ENCODE measurements at regions of chr7 and their contacts with region 1.

Region 1: DNA sequence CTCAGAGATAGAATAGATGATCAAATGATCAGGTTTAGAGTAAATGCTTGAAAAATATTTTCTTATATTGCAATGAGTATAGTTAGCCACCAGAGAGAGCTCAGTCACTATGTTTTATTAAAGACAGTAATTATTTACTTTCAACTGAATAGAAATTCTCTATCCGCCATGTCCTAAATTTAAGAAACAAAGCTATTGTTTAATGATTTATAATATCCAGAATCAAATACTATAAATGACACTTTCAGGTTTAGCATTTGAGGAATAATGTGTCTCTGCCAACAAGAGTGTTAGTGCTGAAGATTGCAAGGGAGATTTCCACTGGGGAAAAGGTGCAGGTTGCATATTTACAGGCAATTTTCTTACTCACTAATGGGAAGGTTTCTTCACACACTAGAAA is 184.7 kb downstream of the DGKB start:
- DNase-seq: no peak

Region 2: DNA sequence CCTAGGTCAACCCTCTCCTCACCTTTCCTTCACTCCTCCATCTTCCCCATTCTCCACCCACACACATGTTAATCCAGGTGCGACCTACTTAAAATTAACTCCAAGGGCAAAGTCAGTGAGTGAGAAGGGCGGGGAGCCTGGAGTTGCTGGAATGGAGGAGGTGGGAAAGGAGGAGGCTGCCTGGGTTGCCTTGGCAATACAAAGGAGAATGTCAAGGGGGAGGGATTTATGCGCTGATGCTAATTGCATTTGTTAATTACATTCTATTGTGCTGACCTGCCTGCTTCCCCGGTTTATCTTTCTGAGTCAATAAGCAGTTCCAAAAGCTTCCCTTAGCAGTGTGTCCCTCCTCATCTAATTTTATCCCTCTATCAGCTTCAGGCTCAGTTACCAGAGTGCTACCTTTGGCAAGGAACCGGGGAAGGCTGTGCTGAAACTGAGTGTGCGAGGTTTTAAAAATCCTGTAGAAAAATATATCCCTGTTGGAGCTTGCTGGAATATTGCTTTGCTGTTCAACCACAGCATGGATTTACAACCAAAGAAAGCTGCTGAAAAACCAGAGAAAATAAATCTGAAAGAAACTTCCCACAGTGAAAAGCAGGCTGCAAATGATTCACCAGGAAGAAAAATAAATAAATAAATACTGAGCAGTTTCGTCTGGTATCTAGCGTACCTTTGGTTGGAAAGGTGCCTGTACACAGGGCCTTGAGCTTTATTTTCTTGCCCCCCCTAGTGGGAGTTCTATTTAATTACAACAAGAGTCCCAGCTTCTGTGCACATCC is 297.9 kb after region 1 on chr7:
- intact Hi-C with region 1: loop called (anchors 2 kb)
- DNase-seq: peak in 3 of 10 donors; percentile 7 to 66 (median 11)

Region 3: DNA sequence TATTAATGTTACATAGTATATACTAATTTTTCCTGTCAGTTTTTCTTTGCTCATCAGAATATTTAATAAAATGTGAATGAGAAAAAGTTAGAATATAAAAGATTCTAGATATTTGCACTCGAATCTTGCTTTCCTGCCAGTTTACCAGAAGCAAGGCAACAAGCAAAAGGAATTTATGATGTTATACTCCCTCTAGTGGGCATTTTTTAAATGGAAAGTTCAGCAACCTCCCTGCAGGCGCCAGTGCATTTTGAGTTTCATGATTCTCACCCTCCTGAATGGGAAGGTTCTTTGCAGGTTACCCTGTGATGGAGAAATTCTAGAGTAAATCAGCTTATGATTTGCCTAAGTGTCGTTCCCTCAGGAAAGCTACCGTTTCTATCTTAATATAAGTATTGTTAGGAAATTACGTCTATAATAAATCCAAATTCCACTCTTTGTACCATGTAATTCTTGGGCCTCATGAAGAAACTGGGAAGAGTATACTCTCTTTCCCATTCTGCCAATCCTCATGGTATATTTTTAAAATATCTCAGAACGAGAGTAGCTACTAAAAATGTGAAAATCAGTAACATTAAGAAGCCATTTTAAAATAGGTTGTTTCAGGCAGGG is 1353.5 kb after region 1 on chr7:
- intact Hi-C with region 1: loop called (anchors 5 kb)
- DNase-seq: no peak

Measured in posterior cingulate gyrus (tissue), 11 donors.